H1 (cell line): ENCODE measurements at regions of chr11 and their contacts with region 1.

Region 1: DNA sequence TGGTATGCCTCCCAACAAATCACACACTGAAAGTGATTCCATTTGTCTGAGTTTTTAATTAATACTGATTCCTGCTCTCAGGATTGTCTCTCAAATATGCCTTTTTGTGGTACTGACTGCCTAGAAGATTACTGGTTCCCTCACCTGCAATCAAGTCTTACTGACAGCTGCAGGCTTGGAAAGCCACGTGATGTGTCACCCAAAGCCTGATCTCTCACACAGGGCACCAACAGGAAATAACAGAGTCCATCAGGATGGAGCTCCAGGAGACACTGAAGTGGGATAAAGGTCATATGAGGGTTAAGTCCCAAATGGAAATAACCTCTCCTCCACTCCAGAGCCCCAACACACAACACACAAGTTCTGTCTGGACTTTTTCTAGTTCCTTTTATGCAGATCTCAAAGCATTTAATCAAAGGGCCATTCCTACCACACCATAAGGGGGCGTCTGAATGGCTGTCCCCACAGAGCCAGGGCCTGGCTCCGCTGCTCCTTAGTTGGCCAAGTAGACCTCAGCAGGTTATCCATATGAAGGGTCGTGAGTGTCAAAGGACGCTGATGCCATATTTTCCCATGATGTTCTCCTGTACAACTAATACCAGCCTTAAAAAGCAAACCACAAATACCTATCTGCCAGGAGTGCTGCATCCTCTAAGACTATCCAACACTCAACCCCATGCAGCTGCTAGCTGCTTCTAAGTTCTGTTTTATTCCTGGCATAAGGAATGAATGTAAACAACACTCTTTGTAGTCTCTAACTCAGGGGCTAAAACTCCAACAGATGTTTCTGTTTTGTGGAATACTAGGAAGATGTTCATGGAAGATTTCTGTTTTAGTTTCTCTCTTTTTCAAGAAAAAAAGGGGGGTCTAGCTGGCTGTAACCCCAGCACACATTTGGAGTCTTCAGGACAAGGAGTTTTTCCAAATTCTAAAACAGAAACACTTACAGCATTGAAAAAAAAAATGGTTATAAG is 13.0 kb downstream of the SCUBE2 start:
- DNase-seq: peak in 1 of 2 experiments; percentile 46
- H3K4me3 ChIP-seq: no peak overlapping the region
- H3K27ac ChIP-seq: no peak overlapping the region
- H3K4me1 ChIP-seq: no peaks in the 10 kb centered on the region; a peak in 1 of 7 replicates
- H3K27me3 ChIP-seq: no peaks in the 10 kb centered on the region
- CTCF ChIP-seq: peak; percentile 46 to 62 (median 54)
- EP300 ChIP-seq: no peak
- POLR2A ChIP-seq: no peak
- RAD21 ChIP-seq: peak; percentile 26 to 52; a peak in 3 of 4 replicates

Region 2: DNA sequence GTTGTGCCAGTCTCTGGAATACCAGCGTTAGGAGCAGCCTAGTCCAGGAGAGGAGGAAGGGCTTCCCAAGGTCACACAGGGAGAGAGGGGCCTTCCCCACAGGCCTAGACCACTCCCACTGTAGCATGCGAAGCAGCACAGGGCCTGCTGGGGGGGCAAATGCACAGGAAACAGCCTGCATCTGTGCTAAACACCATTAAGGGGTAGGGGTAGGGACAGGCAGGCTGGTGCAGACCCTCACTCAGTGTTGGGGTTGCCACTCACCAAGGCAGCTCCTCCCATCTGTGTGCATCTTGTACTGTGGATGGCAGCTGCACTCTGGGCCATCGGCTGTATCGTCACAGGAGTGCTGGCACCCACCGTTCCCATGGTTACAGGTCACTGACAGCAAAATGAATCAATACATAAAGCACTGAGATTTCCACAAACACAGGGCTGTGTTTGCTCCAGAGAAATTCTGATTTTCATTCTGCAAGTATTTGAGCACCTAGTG is 11.9 kb before region 1 on chr11:
- CTCF ChIA-PET with region 1: interaction called, 137 read pairs
- POLR2A ChIA-PET with region 1: interaction called, 4 read pairs
- DNase-seq: peak in 1 of 2 experiments; percentile 47
- H3K4me3 ChIP-seq: no peak overlapping the region
- H3K27ac ChIP-seq: 0 out of 2 replicates have a peak overlapping the region, but pooled peaks have one; percentile 27
- H3K4me1 ChIP-seq: peaks cover 0 to 6% (median 2%) of the 10 kb centered on the region in 4 experiments; a peak in 3 of 7 replicates
- H3K27me3 ChIP-seq: no peaks in the 10 kb centered on the region
- CTCF ChIP-seq: no peak
- EP300 ChIP-seq: no peak
- POLR2A ChIP-seq: no peak
- RAD21 ChIP-seq: 0 out of 4 replicates have a peak, but pooled peaks have one; percentile 1 to 2